ENCODE measurements at regions of chr7 and their contacts with region 1.

Region 1: GRCh38 chr7:151123822-151124464 is 37.7 kb downstream of the AGAP3 start:
- DNase-seq: peak; percentile 88
- ATAC-seq: peak; percentile 78

Region 2: GRCh38 chr7:151172273-151173141 is 48.6 kb after region 1 on chr7:
- intact Hi-C with region 1: loop called (anchors 1 kb)
- DNase-seq: peak; percentile 94
- ATAC-seq: peak; percentile 68

Region 3: DNA sequence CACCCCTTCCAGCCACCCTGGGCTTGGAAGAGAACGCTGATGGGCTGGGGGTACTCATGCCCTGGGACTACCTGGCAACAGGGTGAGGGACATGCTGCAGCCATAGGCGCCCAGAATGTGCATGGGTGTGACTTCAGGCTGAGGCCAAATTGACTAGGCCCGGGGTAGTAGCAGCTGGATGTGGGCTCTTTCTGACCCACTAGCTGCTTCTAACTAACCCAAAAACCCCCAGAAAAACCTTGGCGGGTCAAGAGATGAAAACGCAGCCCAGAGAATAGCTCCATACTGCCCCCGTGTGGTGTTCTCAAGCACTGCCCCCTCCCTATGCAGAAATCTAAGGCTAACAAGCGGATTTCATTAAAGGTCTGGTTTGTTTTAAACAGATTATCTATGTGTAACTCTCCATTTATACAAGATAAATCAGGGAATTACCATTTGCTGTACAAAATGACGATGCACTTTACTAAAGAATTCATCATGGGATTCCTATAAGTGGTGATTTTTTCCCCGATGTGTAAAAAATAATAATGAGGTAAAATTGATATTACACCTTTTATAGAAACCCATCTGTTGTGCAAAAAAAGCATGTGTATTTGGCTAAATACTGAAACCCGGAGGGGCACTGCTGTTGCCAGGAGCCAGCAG is 120.4 kb after region 1 on chr7:
- intact Hi-C with region 1: loop called (anchors 2 kb)
- DNase-seq: peak; percentile 65
- ATAC-seq: no peak

Region 4: DNA sequence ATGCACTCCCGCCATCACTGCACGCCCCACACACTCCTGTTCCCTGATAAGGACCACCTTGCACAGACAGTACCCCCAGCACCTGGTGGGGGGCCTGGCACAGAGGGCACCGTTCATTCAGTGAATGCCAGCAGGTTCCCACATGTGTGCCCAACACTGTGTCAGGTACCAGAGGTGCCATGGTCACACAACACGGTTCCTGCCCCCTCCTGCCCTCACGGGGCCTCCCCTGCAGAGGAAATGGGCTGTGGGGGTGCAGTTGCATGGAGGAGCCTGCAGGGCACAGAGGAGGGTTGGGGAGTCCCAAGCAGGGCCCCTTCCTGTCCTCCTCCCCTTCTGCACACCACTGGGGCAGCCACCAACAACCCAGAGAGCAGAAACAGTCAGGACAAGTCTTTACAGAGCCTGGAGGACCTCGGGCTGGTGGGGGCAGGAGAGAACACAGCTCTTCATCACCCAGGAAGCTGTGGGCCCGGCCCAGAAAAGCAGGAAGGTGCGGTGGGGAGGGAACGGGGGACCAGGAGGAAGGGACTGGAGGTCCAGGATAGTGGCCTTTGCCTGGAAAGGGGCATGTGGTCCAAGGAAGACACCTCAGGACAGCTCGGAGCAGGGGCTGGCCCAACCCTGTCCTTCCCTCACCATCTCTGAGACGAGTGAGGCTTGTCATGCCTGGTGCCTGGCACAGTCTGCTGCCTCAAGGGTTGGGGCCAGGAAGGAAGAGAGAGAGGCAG is 309.0 kb after region 1 on chr7:
- intact Hi-C with region 1: no loop called
- DNase-seq: no peak
- ATAC-seq: no peak

Measured in Right ventricle myocardium inferior (tissue), 1 donor.